ENCODE measurements at regions of chr12 and their contacts with region 1.

Region 1: DNA sequence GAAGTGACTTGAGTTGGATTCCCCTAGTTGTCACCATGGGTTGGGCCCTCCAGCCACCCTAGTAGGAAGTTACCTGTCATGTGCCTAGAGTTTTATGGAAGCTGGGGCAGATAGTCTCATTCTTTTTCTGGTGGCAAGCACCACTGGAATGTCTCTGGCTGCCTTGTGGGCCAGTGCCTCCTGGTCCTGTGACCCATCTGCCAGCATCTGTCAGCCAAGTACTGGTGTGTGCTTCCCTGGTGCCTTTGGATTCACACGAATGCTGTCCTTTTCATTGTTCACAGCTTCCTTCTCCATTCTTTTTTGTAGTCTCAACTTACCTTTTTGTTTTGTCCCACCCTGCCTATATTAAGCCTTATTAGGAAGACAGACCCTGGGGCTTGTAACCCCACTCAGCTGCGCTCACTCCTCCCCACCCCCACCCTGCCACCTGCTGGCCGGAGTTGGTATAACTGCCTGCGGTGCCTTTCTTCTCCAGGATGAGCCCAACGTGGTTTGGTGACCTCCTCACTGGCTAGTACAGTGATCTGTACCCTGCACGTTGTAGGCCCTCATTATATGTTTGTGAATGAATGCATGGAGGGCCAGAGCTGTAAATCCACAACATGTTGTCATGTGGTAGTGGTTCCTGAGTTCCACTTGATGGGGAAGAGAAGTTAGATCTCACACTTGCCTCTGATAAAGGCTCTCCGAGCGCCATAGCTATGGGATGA is 125.7 kb downstream of the TSPAN9 start:
- DNase-seq: peak; percentile 69
- H3K4me3 ChIP-seq: no peak overlapping the region
- H3K27ac ChIP-seq: no peak overlapping the region
- H3K4me1 ChIP-seq: peaks cover 20% of the 10 kb centered on the region
- H3K27me3 ChIP-seq: peaks cover 6% of the 10 kb centered on the region
- CTCF ChIP-seq: peak; percentile 99

Region 2: DNA sequence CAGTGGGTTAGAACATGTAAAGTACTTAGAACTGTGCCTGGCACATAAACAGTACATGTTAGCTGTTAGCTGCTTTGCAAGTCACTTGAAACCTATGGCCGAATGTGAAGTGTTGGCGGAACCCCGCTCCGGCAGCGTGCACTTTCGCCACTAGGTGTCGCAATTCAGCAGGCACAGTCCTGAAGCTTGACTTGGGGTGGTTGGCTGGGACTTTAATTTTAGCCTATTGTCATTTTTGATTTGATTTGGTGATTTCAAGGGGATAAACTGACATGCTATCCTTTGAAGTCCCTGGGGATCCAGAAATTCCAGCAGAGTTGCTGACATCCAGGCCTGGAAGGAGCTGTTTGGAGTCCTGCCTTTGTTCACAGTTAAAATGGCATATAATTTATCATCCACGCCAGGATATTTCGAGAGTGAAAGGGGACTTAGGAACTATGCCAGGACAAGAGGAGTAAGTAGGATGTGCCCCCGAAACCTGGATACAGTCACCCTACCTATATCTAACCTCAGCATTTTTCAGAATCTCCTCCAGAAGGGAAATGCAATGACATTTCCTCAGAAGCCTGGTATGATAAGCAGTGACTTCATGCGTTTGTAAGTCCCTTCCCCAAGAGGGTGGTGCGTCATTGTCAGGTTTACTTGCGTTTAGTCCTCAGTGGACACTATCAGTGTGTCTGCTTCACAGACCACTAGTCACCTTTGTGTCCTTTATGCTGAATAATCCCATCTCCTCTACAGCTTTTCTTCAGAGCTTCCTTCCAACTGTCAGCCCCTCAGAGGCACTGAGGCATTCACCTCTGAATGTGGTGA is 129.2 kb before region 1 on chr12:
- CTCF ChIA-PET with region 1: interaction called, 4 read pairs
- POLR2A ChIA-PET with region 1: no interaction called
- intact Hi-C with region 1: loop called (anchors 2 kb)
- DNase-seq: peak; percentile 91
- H3K4me3 ChIP-seq: no peak overlapping the region
- H3K27ac ChIP-seq: no peak overlapping the region
- H3K4me1 ChIP-seq: peaks cover 13% of the 10 kb centered on the region
- H3K27me3 ChIP-seq: no peaks in the 10 kb centered on the region
- CTCF ChIP-seq: peak; percentile 99

Region 3: GRCh38 chr12:3125674-3126073 is 77.2 kb before region 1 on chr12:
- CTCF ChIA-PET with region 1: no interaction called
- POLR2A ChIA-PET with region 1: no interaction called
- intact Hi-C with region 1: no loop called
- DNase-seq: no peak
- H3K4me3 ChIP-seq: no peak overlapping the region
- H3K27ac ChIP-seq: no peak overlapping the region
- H3K4me1 ChIP-seq: no peaks in the 10 kb centered on the region
- H3K27me3 ChIP-seq: no peaks in the 10 kb centered on the region
- CTCF ChIP-seq: no peak

Region 4: DNA sequence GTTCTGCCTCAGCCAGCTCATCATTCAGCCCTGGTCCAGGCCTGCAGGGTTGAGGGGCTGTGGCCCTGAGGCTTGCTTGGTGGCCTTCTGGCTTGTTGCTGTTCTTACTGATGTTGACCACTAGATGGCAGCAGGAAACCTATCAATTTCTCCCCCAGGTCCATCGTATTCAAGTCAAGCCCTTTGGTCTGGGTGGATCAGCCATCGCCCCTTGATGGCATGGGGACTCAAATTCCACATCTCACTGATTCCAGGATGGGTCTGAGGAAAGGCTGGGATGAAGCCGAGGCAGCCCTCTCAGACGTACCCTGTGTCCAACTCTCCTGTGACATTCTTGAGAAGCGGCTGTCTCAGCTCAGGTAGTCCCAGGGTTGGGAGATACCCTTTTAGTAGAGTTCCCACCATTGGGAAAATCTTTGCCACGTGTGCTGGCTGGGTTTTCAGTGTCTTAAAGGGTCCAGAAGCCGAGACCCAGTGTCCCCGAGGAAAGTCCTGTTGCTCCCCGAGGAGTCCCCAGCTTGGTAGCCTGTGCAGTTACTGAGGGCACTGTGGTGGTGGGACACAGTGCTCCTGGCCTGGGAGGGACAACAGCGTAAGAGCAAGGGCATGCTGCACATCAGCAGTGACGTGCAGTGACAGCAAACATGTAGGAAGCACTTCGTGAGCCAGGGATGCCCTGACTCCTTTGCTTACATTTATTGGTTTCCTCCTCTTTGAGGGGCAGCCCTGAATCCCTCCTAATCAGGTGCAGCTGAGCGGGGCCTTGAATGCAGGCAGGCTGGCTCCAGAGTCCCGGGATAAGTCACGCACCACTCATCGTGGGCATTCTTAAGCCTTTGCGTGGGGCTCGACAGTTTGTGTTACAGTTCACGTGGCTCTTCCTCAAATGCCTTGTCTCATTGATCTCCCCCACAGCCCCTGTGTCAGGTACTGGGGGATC is 67.1 kb before region 1 on chr12:
- CTCF ChIA-PET with region 1: no interaction called
- POLR2A ChIA-PET with region 1: no interaction called
- intact Hi-C with region 1: loop called (anchors 2 kb)
- DNase-seq: peak; percentile 74
- H3K4me3 ChIP-seq: no peak overlapping the region
- H3K27ac ChIP-seq: no peak overlapping the region
- H3K4me1 ChIP-seq: peaks cover 42% of the 10 kb centered on the region
- H3K27me3 ChIP-seq: no peaks in the 10 kb centered on the region
- CTCF ChIP-seq: peak; percentile 82

Region 5: GRCh38 chr12:3158851-3159465 is 43.9 kb before region 1 on chr12:
- CTCF ChIA-PET with region 1: no interaction called
- POLR2A ChIA-PET with region 1: no interaction called
- intact Hi-C with region 1: loop called (anchors 5 kb)
- DNase-seq: peak; percentile 57
- H3K4me3 ChIP-seq: no peak overlapping the region
- H3K27ac ChIP-seq: peak overlapping the region; percentile 47
- H3K4me1 ChIP-seq: peaks cover 46% of the 10 kb centered on the region
- H3K27me3 ChIP-seq: no peaks in the 10 kb centered on the region
- CTCF ChIP-seq: no peak

Region 6: DNA sequence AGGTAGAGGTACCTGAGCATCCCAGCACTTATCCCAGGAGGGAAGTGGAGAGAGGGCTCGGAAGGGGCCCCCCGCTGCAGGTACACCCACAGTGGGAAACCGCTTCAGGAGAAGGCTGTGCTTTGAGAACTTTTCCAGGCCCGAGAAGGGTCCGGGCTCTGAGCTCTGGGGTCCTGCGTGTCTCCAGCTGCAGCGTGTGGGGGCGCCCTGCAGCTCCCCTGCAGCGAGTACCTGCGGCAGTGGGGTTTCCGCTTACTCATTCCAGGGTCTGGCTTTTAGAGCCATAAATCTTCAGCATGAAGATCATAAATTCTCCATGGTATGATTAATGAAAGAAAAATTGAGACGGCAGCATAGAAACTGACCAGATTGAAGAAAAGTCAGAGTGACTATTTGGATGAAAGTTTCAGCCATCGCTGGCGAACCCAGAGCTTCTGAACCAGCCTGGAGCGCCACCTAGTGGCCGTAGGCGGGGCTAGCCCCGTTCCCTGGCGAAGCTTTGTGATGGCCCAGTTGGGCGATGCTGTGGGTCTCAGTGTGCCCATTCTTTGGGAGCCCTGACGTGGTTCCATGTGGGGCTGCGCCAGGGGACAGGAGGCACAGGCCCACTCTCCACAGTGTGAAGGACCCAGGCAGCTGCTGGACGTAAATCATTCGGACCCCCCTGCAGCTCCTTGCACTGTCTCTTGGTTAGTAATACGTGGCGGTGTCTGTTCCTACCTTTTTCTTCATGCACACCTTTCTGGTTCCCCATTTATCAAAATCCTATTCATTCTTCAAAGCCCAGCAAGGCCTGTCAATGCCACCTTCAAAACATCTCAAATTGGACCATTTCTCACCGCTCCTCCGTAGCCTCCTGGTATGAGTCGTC is 72.5 kb after region 1 on chr12:
- CTCF ChIA-PET with region 1: interaction called, 3 read pairs
- POLR2A ChIA-PET with region 1: no interaction called
- intact Hi-C with region 1: loop called (anchors 2 kb)
- DNase-seq: peak; percentile 77
- H3K4me3 ChIP-seq: no peak overlapping the region
- H3K27ac ChIP-seq: no peak overlapping the region
- H3K4me1 ChIP-seq: no peaks in the 10 kb centered on the region
- H3K27me3 ChIP-seq: no peaks in the 10 kb centered on the region
- CTCF ChIP-seq: peak; percentile 96